B cell (primary cell): ENCODE measurements at regions of chr11 and their contacts with region 1.

Region 1: GRCh38 chr11:57644748-57645688 is 4.7 kb downstream of the YPEL4 start:
- DNase-seq: peak; percentile 85
- ATAC-seq: peak; percentile 71
- H3K4me3 ChIP-seq: no peak overlapping the region
- H3K4me3 Mint-ChIP-seq: no peak overlapping the region
- H3K27ac ChIP-seq: no peak overlapping the region
- H3K27ac Mint-ChIP-seq: no peak overlapping the region
- H3K4me1 ChIP-seq: peaks cover 43 to 46% of the 10 kb centered on the region in 2 donors
- H3K4me1 Mint-ChIP-seq: peaks cover 40% of the 10 kb centered on the region
- H3K27me3 ChIP-seq: peaks cover 0 to 58% (median 47%) of the 10 kb centered on the region in 4 experiments
- H3K27me3 Mint-ChIP-seq: peaks cover 70% of the 10 kb centered on the region
- CTCF ChIP-seq: peak; percentile 81

Region 2: DNA sequence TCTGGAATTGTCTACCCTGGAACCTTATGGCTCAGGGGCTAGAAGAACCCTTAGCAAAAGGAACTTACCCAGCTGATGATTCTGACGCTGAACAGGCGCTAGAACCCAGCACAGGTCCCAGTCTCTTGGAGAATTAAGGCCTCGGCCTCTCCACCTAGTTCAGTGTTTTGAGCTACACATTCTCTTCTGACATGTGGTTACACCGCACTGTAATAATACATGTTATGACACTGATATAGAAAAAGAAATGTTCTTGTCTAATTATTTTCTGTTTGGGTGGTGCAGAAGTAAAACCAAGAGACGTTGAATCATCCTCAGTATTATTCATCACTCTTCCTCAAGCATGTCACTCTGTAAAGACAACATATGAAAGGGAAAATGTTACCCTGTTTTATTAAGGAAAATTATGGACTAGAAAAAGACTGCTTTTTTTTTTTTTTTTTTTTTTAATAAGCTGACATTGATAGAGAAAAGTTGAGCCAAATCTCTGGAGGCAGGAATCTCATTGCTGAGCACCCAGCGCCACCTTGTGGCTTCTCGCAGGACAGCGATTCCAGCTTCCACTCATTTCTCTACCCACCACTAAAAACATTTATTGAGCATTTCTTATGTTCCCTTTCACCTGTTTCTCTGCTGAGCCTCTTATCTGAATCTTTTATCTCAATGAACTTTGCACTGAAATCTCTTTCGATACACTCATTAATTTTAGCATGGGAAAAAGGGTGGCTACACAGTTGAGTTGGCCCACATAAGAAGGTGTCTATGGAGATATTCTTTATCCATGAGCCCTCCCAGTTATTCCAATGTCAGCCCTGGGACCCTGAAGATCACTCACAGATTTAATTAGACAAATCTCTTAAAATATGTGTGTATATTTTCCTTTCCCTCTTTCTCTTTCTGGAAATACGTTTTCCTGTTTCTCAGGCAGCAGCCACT is 395.4 kb before region 1 on chr11:
- CTCF ChIA-PET with region 1: no interaction called
- POLR2A ChIA-PET with region 1: no interaction called
- intact Hi-C with region 1: no loop called
- DNase-seq: peak; percentile 30
- ATAC-seq: peak; percentile 31
- H3K4me3 ChIP-seq: no peak overlapping the region
- H3K4me3 Mint-ChIP-seq: no peak overlapping the region
- H3K27ac ChIP-seq: no peak overlapping the region
- H3K27ac Mint-ChIP-seq: no peak overlapping the region
- H3K4me1 ChIP-seq: peaks cover 0 to 4% of the 10 kb centered on the region in 2 donors
- H3K4me1 Mint-ChIP-seq: peaks cover 4% of the 10 kb centered on the region
- H3K27me3 ChIP-seq: peaks cover 0 to 25% (median 3%) of the 10 kb centered on the region in 4 experiments
- H3K27me3 Mint-ChIP-seq: peaks cover 31% of the 10 kb centered on the region
- CTCF ChIP-seq: peak; percentile 71

Region 3: DNA sequence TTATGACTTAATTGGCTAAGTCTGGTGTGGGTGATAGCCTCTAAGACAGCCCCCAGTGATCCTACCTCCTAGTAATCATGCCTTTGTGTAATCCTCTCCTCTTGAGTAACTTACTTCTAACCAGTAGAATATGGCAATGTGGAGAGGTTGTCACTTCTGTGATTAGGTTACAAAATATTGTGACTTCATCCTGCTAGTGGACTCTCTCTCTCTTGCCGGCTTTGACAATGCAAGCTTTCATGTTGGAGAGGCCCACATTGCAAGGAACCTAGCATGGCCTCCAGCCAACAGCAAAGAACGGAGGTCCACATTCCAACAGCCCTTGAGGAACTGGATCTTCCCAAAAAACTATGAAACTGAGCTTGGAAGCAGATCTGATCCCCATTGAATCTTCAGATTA is 14.8 kb before region 1 on chr11:
- CTCF ChIA-PET with region 1: interaction called, 23 read pairs
- POLR2A ChIA-PET with region 1: no interaction called
- intact Hi-C with region 1: no loop called
- DNase-seq: no peak
- ATAC-seq: no peak
- H3K4me3 ChIP-seq: no peak overlapping the region
- H3K4me3 Mint-ChIP-seq: no peak overlapping the region
- H3K27ac ChIP-seq: no peak overlapping the region
- H3K27ac Mint-ChIP-seq: no peak overlapping the region
- H3K4me1 ChIP-seq: no peaks in the 10 kb centered on the region
- H3K4me1 Mint-ChIP-seq: no peaks in the 10 kb centered on the region
- H3K27me3 ChIP-seq: peaks cover 0 to 27% (median 4%) of the 10 kb centered on the region in 4 experiments
- H3K27me3 Mint-ChIP-seq: peaks cover 50% of the 10 kb centered on the region
- CTCF ChIP-seq: no peak